PC-3 (cell line): ENCODE measurements at regions of chr1 and their contacts with region 1.

Region 1: DNA sequence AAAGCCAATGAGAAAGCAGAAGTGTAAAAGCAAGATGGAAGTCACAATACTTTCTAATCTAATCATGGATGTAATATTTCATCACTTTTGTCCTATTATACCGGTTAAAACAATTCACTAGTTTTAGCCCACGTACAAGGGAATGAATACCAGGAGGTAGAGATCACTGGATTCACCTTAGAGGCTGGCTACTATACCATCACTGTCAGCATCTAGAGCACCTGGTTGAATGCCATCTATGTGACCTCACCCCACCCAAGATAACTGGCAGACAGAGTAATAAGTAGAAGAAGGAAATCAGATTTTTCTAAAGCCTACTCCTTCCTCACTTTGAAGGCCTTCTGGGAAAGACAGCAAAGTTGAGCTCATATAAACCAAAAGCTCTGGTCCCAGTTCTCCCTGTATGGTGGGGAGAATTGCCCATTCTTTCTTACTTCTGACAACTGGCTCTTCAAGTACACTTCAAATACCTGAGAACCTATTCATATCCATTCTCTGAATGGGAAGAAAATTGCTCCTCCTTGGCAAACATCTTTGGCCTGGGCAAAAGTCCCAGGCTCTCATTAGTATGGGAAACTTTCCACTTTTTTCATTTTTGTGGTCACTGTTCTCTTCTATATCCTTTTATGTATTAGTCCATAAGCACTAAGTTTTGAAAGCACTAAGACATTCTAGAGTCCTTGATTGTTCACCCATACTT is 24.8 kb downstream of the HSD3B1 start:
- DNase-seq: peak; percentile 57
- ATAC-seq: no peak
- H3K4me3 ChIP-seq: no peak overlapping the region
- H3K27ac ChIP-seq: no peak overlapping the region
- H3K4me1 ChIP-seq: no peaks in the 10 kb centered on the region
- H3K27me3 ChIP-seq: peaks cover 16% of the 10 kb centered on the region; the same call in 1 of the 2 replicates
- CTCF ChIP-seq: no peak

Region 2: GRCh38 chr1:119482531-119483425 is 49.0 kb before region 1 on chr1:
- CTCF ChIA-PET with region 1: no interaction called
- POLR2A ChIA-PET with region 1: no interaction called
- intact Hi-C with region 1: loop called (anchors 10 kb)
- DNase-seq: no peak
- ATAC-seq: no peak
- H3K4me3 ChIP-seq: no peak overlapping the region
- H3K27ac ChIP-seq: no peak overlapping the region
- H3K4me1 ChIP-seq: no peaks in the 10 kb centered on the region
- H3K27me3 ChIP-seq: no peaks in the 10 kb centered on the region; the same call in 1 of the 2 replicates
- CTCF ChIP-seq: no peak

Region 3: DNA sequence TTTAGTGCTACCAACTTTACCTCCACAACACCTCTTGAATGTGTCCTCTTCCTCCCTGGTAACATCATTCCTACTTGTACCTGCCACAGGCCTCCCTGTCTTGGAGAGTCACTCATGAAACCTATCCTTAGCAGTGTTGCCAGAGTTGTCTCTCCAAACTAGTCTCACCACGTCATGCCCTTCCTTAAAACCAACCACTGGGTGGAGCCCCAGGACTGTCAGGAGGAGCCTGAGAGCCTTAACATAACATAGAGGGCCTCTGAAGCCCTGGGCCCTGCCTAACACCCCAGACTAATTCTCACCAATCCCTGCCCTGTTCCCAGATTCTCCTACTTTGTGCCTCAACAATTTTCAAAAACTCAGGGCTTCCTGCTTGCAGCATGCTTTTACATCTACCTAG is 51.0 kb after region 1 on chr1:
- CTCF ChIA-PET with region 1: no interaction called
- POLR2A ChIA-PET with region 1: no interaction called
- intact Hi-C with region 1: no loop called
- DNase-seq: peak; percentile 82
- ATAC-seq: peak; percentile 97
- H3K4me3 ChIP-seq: no peak overlapping the region
- H3K27ac ChIP-seq: no peak overlapping the region
- H3K4me1 ChIP-seq: no peaks in the 10 kb centered on the region
- H3K27me3 ChIP-seq: no peaks in the 10 kb centered on the region
- CTCF ChIP-seq: peak; percentile 77